ENCODE measurements at regions of chr21 and their contacts with region 1.

Region 1: GRCh38 chr21:28336314-28336713 is 656.4 kb downstream of the LTN1 start:
- DNase-seq: peak; percentile 76
- ATAC-seq: peak; percentile 53
- H3K4me3 ChIP-seq: no peak overlapping the region
- H3K27ac ChIP-seq: no peak overlapping the region
- H3K4me1 ChIP-seq: peaks cover 9% of the 10 kb centered on the region; the same call in 1 of the 2 replicates
- H3K27me3 ChIP-seq: no peaks in the 10 kb centered on the region
- CTCF ChIP-seq: peak; percentile 88

Region 2: GRCh38 chr21:27564684-27565301 is 771.5 kb before region 1 on chr21:
- CTCF ChIA-PET with region 1: no interaction called
- POLR2A ChIA-PET with region 1: no interaction called
- intact Hi-C with region 1: loop called (anchors 2 kb)
- DNase-seq: peak; percentile 52
- ATAC-seq: peak; percentile 99
- H3K4me3 ChIP-seq: no peak overlapping the region
- H3K27ac ChIP-seq: no peak overlapping the region
- H3K4me1 ChIP-seq: peaks cover 1% of the 10 kb centered on the region
- H3K27me3 ChIP-seq: no peaks in the 10 kb centered on the region
- CTCF ChIP-seq: peak; percentile 80

Region 3: GRCh38 chr21:27759091-27759659 is 577.1 kb before region 1 on chr21:
- CTCF ChIA-PET with region 1: interaction called, 3 read pairs
- POLR2A ChIA-PET with region 1: no interaction called
- intact Hi-C with region 1: loop called (anchors 1 kb)
- DNase-seq: peak; percentile 39
- ATAC-seq: peak; percentile 83
- H3K4me3 ChIP-seq: no peak overlapping the region
- H3K27ac ChIP-seq: no peak overlapping the region
- H3K4me1 ChIP-seq: no peaks in the 10 kb centered on the region
- H3K27me3 ChIP-seq: no peaks in the 10 kb centered on the region
- CTCF ChIP-seq: peak; percentile 64

Region 4: DNA sequence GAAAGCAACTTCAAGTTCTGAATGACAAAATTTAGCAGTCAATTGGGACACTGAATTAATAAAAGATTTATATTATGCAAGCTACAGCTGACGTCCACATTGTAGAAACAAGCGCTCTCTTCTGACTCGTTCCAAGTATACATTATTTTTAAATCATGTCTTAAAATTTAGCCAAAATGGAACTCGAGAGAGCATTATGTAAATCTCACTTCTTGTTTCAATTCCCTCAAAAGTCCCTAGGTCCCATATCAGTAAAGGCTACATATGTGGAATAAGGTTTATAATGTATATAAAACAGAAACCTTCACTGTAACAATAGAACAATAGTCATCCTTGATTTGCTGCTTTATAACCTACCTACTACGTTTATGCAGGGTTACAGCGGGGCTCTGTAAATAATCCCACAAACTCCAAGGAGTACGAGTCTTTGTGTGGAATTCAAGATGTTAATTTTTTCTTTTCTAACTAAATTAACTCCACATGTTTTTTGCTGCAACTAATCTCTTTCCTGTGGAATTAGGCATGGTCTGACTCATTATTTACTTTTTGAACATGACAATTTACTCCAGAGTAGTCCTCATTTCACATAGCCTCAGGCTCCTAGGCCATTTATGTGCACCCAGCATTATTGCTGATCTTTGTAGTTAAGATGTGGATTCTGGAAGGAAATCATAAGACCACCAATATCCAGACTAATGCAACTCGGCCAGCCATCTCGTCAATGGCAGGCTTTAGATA is 128.7 kb before region 1 on chr21:
- CTCF ChIA-PET with region 1: no interaction called
- POLR2A ChIA-PET with region 1: no interaction called
- intact Hi-C with region 1: loop called (anchors 5 kb)
- DNase-seq: peak; percentile 77
- ATAC-seq: peak; percentile 99
- H3K4me3 ChIP-seq: no peak overlapping the region
- H3K27ac ChIP-seq: no peak overlapping the region; the same call in 1 of the 2 replicates
- H3K4me1 ChIP-seq: peaks cover 16% of the 10 kb centered on the region
- H3K27me3 ChIP-seq: no peaks in the 10 kb centered on the region
- CTCF ChIP-seq: no peak

Region 5: DNA sequence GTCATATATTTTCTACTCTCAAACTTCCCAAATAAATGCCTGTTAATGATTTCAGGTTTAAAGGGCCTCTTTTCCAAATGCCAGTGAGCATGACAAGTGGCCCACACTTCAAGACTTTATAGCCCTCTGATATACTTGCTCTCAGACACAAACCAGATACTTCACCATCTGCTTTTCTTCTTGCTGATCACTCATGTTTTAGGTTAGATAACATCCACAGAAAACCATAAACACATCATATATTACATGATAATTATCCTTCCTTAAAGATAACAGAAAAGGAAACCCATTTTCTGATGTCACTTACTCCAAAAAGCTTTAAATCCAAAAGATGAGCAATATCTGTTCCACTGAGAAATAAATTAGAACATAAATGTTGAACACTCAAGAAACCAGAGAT is 67.1 kb before region 1 on chr21:
- CTCF ChIA-PET with region 1: no interaction called
- POLR2A ChIA-PET with region 1: no interaction called
- intact Hi-C with region 1: loop called (anchors 5 kb)
- DNase-seq: no peak
- ATAC-seq: no peak
- H3K4me3 ChIP-seq: no peak overlapping the region
- H3K27ac ChIP-seq: no peak overlapping the region
- H3K4me1 ChIP-seq: peaks cover 20% of the 10 kb centered on the region
- H3K27me3 ChIP-seq: no peaks in the 10 kb centered on the region
- CTCF ChIP-seq: no peak

Region 6: GRCh38 chr21:28375708-28376385 is 39.5 kb after region 1 on chr21:
- CTCF ChIA-PET with region 1: no interaction called
- POLR2A ChIA-PET with region 1: no interaction called
- intact Hi-C with region 1: no loop called
- DNase-seq: no peak
- ATAC-seq: no peak
- H3K4me3 ChIP-seq: no peak overlapping the region
- H3K27ac ChIP-seq: no peak overlapping the region
- H3K4me1 ChIP-seq: no peaks in the 10 kb centered on the region
- H3K27me3 ChIP-seq: no peaks in the 10 kb centered on the region
- CTCF ChIP-seq: no peak

Region 7: GRCh38 chr21:28793043-28793442 is 456.7 kb after region 1 on chr21:
- CTCF ChIA-PET with region 1: no interaction called
- POLR2A ChIA-PET with region 1: no interaction called
- intact Hi-C with region 1: loop called (anchors 5 kb)
- DNase-seq: peak; percentile 49
- ATAC-seq: peak; percentile 25; the same call in 1 of the 2 replicates
- H3K4me3 ChIP-seq: no peak overlapping the region
- H3K27ac ChIP-seq: no peak overlapping the region
- H3K4me1 ChIP-seq: peaks cover 23% of the 10 kb centered on the region
- H3K27me3 ChIP-seq: no peaks in the 10 kb centered on the region
- CTCF ChIP-seq: peak; percentile 66